OCI-LY7 (cell line): ENCODE measurements at regions of chr12 and their contacts with region 1.

Region 1: DNA sequence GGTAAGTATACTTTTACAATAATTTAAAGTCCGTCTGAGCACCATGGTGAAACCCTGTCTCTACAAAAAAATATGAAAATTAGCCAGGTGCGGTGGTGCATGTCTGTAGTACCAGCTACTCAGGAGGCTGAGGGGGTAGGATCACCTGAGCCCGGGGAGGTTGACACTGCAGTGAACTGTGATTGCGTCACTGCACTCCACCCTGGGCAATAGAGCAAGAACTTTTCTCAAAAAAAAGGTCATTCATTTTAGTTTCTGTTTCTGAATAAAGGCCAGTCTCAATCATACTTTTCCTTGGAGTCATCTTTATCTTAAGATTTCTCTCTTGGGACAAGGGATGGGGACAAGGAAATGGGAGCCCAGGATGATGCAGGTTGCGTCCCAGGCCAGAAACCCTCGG is 12.9 kb downstream of the ANKRD13A start:
- DNase-seq: peak; percentile 80
- H3K4me3 ChIP-seq: peak overlapping the region; percentile 64
- H3K27ac ChIP-seq: peak overlapping the region; percentile 83
- H3K4me1 ChIP-seq: peaks cover 73% of the 10 kb centered on the region
- CTCF ChIP-seq: no peak

Region 2: GRCh38 chr12:109995686-109996482 is 16.3 kb before region 1 on chr12 and contains the start of gene GIT2:
- CTCF ChIA-PET with region 1: no interaction called
- POLR2A ChIA-PET with region 1: interaction called, 48 read pairs
- intact Hi-C with region 1: loop called (anchors 1 kb)
- DNase-seq: peak; percentile 99
- H3K4me3 ChIP-seq: peak within 1 kb of the TSS; percentile 96
- H3K27ac ChIP-seq: peak within 1 kb of the TSS; percentile 92
- H3K4me1 ChIP-seq: peaks cover 37% of the 10 kb centered on the region
- CTCF ChIP-seq: peak; percentile 35; the same call in 1 of the 2 replicates
- total RNA-seq, gene GIT2: 57.1 and 60.6 TPM in 2 replicates

Region 3: DNA sequence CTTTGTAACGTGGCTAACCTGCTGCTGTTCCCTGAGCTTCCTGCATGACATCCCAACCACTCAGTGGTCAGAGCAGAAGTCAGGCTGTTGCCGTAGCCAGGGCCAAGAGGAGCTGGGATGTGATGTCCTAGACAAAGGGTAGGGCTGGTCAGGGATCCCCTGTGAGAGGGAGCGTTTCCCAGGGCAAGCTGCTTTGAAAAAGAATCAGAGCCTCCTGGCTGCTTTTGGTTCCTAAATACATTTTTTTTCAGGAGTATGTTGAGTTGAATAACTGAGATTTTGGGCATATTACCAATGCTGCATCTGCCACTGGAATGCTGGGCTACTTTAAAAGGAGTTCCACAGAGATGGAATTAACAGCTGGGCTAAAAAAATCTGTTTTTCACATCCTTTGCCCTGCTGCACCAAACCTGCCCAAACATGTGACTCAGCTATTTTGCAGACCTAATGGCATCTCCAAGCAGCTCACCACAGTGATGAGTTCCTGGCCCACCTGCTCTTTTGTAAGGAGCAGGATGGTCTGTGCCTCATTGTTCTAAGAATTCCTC is 11.0 kb after region 1 on chr12:
- CTCF ChIA-PET with region 1: interaction called, 5 read pairs
- POLR2A ChIA-PET with region 1: interaction called, 12 read pairs
- intact Hi-C with region 1: no loop called
- DNase-seq: no peak
- H3K4me3 ChIP-seq: no peak overlapping the region
- H3K27ac ChIP-seq: no peak overlapping the region
- H3K4me1 ChIP-seq: peaks cover 12% of the 10 kb centered on the region
- CTCF ChIP-seq: no peak